IMR-90 (cell line): ENCODE measurements at regions of chr1 and their contacts with region 1.

Region 1: GRCh38 chr1:45291716-45292115 is 35.0 kb upstream of the HPDL start:
- DNase-seq: no peak
- ATAC-seq: no peak
- H3K4me3 ChIP-seq: no peak overlapping the region
- H3K27ac ChIP-seq: no peak overlapping the region
- H3K4me1 ChIP-seq: no peaks in the 10 kb centered on the region
- H3K27me3 ChIP-seq: no peaks in the 10 kb centered on the region
- CTCF ChIP-seq: no peak
- POLR2A ChIP-seq: no peak
- RAD21 ChIP-seq: no peak

Region 2: GRCh38 chr1:45037456-45037855 is 254.3 kb before region 1 on chr1:
- CTCF ChIA-PET with region 1: interaction called, 4 read pairs
- POLR2A ChIA-PET with region 1: no interaction called
- dilution Hi-C with region 1: no loop called
- in situ Hi-C with region 1: no loop called
- intact Hi-C with region 1: loop called (anchors 5 kb)
- DNase-seq: peak; percentile 29
- ATAC-seq: no peak
- H3K4me3 ChIP-seq: no peak overlapping the region
- H3K27ac ChIP-seq: no peak overlapping the region
- H3K4me1 ChIP-seq: no peaks in the 10 kb centered on the region
- H3K27me3 ChIP-seq: peaks cover 5% of the 10 kb centered on the region; the same call in 1 of the 2 replicates
- CTCF ChIP-seq: no peak
- POLR2A ChIP-seq: no peak
- RAD21 ChIP-seq: no peak

Region 3: DNA sequence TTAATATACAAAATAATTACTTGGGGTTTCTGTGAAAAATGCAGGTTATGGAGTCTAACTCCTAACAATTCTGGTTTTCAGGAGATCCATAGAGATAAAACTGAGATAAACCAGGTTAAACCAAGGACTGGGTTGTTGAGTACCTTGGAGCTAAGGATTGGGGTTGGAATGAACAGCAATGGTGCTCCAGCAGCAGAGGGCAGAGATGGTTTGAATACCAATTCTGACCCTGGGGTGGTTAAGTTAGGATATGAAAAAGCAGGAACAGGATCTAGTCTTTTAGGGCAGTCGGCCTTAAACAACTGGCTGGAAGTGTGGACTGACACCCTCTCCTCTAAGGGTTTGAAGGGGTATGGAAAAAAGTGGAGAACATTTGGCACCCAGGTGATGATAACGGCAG is 226.6 kb before region 1 on chr1:
- CTCF ChIA-PET with region 1: no interaction called
- POLR2A ChIA-PET with region 1: no interaction called
- dilution Hi-C with region 1: no loop called
- in situ Hi-C with region 1: no loop called
- intact Hi-C with region 1: no loop called
- DNase-seq: no peak
- ATAC-seq: no peak
- H3K4me3 ChIP-seq: no peak overlapping the region
- H3K27ac ChIP-seq: no peak overlapping the region
- H3K4me1 ChIP-seq: no peaks in the 10 kb centered on the region
- H3K27me3 ChIP-seq: 0 out of 2 replicates have a peak, but pooled peaks cover 1% of the 10 kb centered on the region
- CTCF ChIP-seq: no peak
- POLR2A ChIP-seq: no peak
- RAD21 ChIP-seq: no peak